HCT116 (cell line): ENCODE measurements at regions of chr6 and their contacts with region 1.

Region 1: DNA sequence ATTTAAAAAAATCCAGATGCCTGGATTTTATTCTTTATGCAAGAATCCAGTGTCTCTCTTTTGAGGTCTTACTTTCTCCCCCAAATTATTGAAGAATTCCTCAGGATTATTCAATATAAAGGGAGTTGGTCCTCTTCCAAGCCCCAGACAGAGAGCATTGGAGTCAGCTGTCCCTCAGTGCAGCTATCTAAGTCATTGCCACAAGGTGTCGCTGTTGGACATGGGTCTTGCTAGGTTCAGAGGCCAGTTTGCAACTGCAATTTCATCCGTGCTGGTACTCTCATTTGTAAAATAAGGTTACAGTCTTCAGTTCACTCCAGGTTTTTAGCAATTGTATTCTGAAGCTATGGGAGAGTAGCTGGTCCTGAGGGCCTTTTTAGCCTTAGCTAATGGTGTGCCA is 27.8 kb downstream of the CCN2 start:
- DNase-seq: peak; percentile 83
- ATAC-seq: peak; percentile 81
- H3K4me3 ChIP-seq: no peak overlapping the region
- H3K27ac ChIP-seq: no peak overlapping the region
- H3K4me1 ChIP-seq: peaks cover 0 to 7% of the 10 kb centered on the region in 2 experiments; a peak in 2 of 4 replicates
- H3K27me3 ChIP-seq: no peaks in the 10 kb centered on the region
- CTCF ChIP-seq: peak; percentile 56 to 88 (median 78); a peak in 5 of 6 replicates
- POLR2A ChIP-seq: no peak
- RAD21 ChIP-seq: peak; percentile 62

Region 2: GRCh38 chr6:132161283-132161682 is 237.9 kb after region 1 on chr6:
- CTCF ChIA-PET with region 1: interaction called, 6 read pairs
- POLR2A ChIA-PET with region 1: no interaction called
- RAD21 ChIA-PET with region 1: no interaction called
- intact Hi-C with region 1: loop called (anchors 1 kb)
- DNase-seq: peak; percentile 16
- ATAC-seq: peak; percentile 77
- H3K4me3 ChIP-seq: no peak overlapping the region
- H3K27ac ChIP-seq: no peak overlapping the region
- H3K4me1 ChIP-seq: no peaks in the 10 kb centered on the region
- H3K27me3 ChIP-seq: no peaks in the 10 kb centered on the region
- CTCF ChIP-seq: peak; percentile 53 to 63 (median 60); a peak in 5 of 6 replicates
- POLR2A ChIP-seq: no peak
- RAD21 ChIP-seq: peak; percentile 76

Region 3: DNA sequence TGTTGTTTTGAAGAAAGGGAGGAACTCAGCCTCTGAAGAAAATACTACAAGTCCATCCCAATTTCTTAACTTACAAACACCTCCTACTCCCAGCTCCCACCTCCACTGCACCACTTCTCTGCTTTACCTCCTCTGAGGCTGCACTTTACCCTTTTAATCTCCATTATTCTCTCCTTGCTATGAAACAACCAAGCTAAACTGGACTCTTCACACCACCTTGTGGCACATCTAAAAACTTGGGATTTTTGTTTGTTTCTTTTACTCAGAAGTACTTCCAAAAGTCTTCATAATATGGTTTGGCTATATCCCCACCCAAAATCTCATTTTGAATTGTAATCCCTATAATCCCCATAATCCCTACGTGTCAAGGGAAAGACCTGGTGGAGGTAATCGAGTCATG is 335.7 kb after region 1 on chr6:
- CTCF ChIA-PET with region 1: interaction called, 14 read pairs
- POLR2A ChIA-PET with region 1: no interaction called
- RAD21 ChIA-PET with region 1: interaction called in 1 of 2 experiments, 3 read pairs
- intact Hi-C with region 1: loop called (anchors 1 kb)
- DNase-seq: no peak
- ATAC-seq: peak; percentile 60
- H3K4me3 ChIP-seq: no peak overlapping the region
- H3K27ac ChIP-seq: no peak overlapping the region
- H3K4me1 ChIP-seq: no peaks in the 10 kb centered on the region
- H3K27me3 ChIP-seq: no peaks in the 10 kb centered on the region
- CTCF ChIP-seq: peak in 2 of 3 experiments; percentile 42 to 54; a peak in 3 of 6 replicates
- POLR2A ChIP-seq: no peak
- RAD21 ChIP-seq: peak; percentile 55

Region 4: GRCh38 chr6:132300323-132300949 is 377.1 kb after region 1 on chr6:
- CTCF ChIA-PET with region 1: interaction called, 46 read pairs
- POLR2A ChIA-PET with region 1: no interaction called
- RAD21 ChIA-PET with region 1: no interaction called
- intact Hi-C with region 1: loop called (anchors 1 kb)
- DNase-seq: peak; percentile 40
- ATAC-seq: peak; percentile 91
- H3K4me3 ChIP-seq: no peak overlapping the region
- H3K27ac ChIP-seq: no peak overlapping the region
- H3K4me1 ChIP-seq: no peaks in the 10 kb centered on the region
- H3K27me3 ChIP-seq: no peaks in the 10 kb centered on the region
- CTCF ChIP-seq: peak; percentile 47 to 80 (median 70); a peak in 5 of 6 replicates
- POLR2A ChIP-seq: no peak
- RAD21 ChIP-seq: peak; percentile 87